Breast epithelium (tissue), 4 donors: ENCODE measurements at regions of chr4 and their contacts with region 1.

Region 1: DNA sequence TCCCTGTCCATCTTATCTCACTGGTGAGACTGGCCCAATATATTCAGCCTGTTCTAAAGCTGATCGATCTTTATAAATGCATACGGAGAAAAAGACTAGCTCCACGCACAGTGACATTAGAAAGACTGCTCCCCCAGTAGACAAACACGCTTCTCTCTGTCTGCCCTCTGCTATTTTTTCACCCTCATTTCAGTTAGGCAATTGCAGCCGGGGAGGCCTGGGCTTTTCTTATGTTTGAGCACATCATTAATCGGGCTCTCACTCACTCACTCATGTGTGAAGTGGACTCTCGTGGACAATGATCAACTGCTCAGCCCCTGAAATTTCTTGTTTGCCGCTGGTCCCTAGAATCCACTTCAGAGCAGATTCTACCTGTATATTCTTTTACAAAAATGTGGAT is 824.7 kb upstream of the TENM3 start:
- DNase-seq: no peak
- H3K4me3 ChIP-seq: no peak overlapping the region
- H3K27ac ChIP-seq: no peak overlapping the region
- H3K4me1 ChIP-seq: no peaks in the 10 kb centered on the region
- H3K27me3 ChIP-seq: no peaks in the 10 kb centered on the region
- CTCF ChIP-seq: no peak
- POLR2A ChIP-seq: no peak

Region 2: GRCh38 chr4:179836179-179837075 is 1582.1 kb before region 1 on chr4:
- intact Hi-C with region 1: no loop called
- DNase-seq: no peak
- H3K4me3 ChIP-seq: peak overlapping the region in 2 of 3 donors; percentile 9 to 13
- H3K27ac ChIP-seq: peak overlapping the region; percentile 14 to 72
- H3K4me1 ChIP-seq: no peaks in the 10 kb centered on the region
- H3K27me3 ChIP-seq: no peaks in the 10 kb centered on the region
- CTCF ChIP-seq: no peak
- POLR2A ChIP-seq: no peak

Region 3: GRCh38 chr4:181784881-181785280 is 366.4 kb after region 1 on chr4:
- intact Hi-C with region 1: loop called (anchors 10 kb)
- DNase-seq: no peak
- H3K4me3 ChIP-seq: no peak overlapping the region
- H3K27ac ChIP-seq: no peak overlapping the region
- H3K4me1 ChIP-seq: no peaks in the 10 kb centered on the region
- H3K27me3 ChIP-seq: no peaks in the 10 kb centered on the region
- CTCF ChIP-seq: no peak
- POLR2A ChIP-seq: no peak

Region 4: DNA sequence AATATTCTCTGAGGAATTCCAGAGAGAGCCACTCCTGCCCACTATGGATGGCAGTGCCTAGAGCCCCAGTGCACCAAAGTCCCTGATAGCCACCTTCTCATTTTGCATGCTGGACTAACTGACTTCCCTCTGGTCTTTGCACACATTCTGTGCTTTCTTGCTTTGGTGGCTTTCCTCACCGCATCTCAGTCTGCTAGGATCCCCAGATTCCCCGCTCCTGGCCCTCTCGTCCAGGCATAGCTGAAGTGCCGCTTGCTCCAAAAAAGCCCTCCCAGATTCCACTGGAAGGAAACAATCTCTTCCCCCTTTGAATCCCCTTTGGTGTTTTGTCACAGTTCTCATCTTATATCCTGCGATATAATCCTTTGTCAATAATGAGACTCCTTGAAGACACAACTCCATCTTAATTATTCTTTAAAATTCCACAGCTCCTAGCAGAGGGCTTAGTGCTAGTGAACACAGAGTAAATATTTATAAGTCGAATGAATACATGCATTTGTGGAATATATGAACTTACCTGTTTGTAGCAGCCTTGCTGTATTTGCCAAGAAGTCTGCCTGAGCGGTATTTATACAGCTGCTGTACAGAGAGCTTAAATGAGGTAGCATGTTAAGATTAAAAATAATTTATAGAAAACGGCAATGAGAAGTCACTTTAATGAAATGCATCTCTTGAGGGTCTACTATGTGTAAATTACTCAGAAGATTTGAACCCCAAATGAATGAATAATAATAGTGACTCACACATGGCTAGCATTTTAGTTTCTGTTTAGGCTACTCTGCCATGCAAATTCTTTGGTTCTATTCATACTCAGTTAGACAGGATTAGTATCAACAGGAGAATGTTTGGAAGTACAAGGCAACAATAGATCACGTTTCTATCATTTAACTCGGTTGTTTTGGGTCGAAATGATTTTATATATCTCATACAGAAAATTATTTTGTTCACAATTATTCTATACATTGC is 402.8 kb after region 1 on chr4:
- intact Hi-C with region 1: no loop called
- DNase-seq: no peak
- H3K4me3 ChIP-seq: no peak overlapping the region
- H3K27ac ChIP-seq: no peak overlapping the region
- H3K4me1 ChIP-seq: no peaks in the 10 kb centered on the region
- H3K27me3 ChIP-seq: no peaks in the 10 kb centered on the region
- CTCF ChIP-seq: no peak
- POLR2A ChIP-seq: no peak